Ovary (tissue), 10 donors: ENCODE measurements at regions of chr17 and their contacts with region 1.

Region 1: GRCh38 chr17:8417806-8418205 is 17.9 kb upstream of the NDEL1 start:
- DNase-seq: no peak
- H3K4me3 ChIP-seq: no peak overlapping the region
- H3K27ac ChIP-seq: no peak overlapping the region
- H3K4me1 ChIP-seq: peaks cover 2% of the 10 kb centered on the region
- H3K27me3 ChIP-seq: no peaks in the 10 kb centered on the region
- CTCF ChIP-seq: no peak
- EP300 ChIP-seq: no peak
- POLR2A ChIP-seq: no peak

Region 2: DNA sequence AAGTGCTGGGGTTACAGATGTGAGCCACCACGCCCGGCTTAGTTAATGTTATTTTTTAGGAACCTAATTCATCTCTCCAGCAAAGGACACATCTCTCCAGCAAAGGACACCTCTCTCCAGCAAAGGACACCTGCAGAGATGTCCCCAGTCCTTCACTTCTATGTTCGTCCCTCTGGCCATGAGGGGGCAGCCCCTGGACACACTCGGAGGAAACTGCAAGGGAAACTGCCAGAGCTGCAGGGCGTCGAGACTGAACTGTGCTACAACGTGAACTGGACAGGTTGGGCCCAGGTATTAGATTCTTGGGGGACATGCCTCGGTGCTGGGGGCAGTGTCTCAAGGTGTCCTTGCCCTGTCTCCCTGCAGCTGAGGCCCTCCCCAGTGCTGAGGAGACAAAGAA is 164.0 kb before region 1 on chr17:
- intact Hi-C with region 1: no loop called
- DNase-seq: no peak
- H3K4me3 ChIP-seq: no peak overlapping the region
- H3K27ac ChIP-seq: no peak overlapping the region
- H3K4me1 ChIP-seq: no peaks in the 10 kb centered on the region
- H3K27me3 ChIP-seq: no peaks in the 10 kb centered on the region
- CTCF ChIP-seq: no peak
- EP300 ChIP-seq: no peak
- POLR2A ChIP-seq: no peak

Region 3: GRCh38 chr17:8479431-8479947 is 61.7 kb after region 1 on chr17:
- intact Hi-C with region 1: no loop called
- DNase-seq: peak; percentile 61 to 82 (median 72)
- H3K4me3 ChIP-seq: no peak overlapping the region
- H3K27ac ChIP-seq: peak overlapping the region in 1 of 2 donors; percentile 62
- H3K4me1 ChIP-seq: peaks cover 22% of the 10 kb centered on the region
- H3K27me3 ChIP-seq: no peaks in the 10 kb centered on the region
- CTCF ChIP-seq: no peak
- EP300 ChIP-seq: no peak
- POLR2A ChIP-seq: no peak

Region 4: DNA sequence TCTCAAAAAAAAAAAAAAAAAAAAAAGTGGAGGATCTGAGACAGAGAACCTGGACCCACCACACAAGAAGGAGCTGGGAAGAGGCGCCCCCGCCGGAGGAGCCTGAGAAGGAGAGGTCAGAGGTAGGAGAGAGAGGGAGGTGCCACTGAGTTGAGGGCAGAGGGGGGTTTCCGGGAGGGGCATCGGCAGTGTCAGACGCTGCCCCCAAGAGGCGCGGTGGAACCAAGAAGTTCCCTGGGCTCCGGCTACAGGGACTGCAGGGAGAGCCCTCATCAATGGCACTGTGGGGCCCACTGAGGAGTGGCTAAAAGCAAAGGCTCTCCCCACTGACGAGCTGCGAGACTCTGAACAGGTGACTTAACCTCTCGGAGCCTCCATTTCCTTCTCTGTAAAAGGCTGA is 322.7 kb after region 1 on chr17:
- intact Hi-C with region 1: loop called in 2 of 4 experiments (anchors 5 kb)
- DNase-seq: no peak
- H3K4me3 ChIP-seq: no peak overlapping the region
- H3K27ac ChIP-seq: no peak overlapping the region
- H3K4me1 ChIP-seq: no peaks in the 10 kb centered on the region
- H3K27me3 ChIP-seq: no peaks in the 10 kb centered on the region
- CTCF ChIP-seq: no peak
- EP300 ChIP-seq: no peak
- POLR2A ChIP-seq: no peak